Mammary epithelial cell (primary cell): ENCODE measurements at regions of chr10 and their contacts with region 1.

Region 1: DNA sequence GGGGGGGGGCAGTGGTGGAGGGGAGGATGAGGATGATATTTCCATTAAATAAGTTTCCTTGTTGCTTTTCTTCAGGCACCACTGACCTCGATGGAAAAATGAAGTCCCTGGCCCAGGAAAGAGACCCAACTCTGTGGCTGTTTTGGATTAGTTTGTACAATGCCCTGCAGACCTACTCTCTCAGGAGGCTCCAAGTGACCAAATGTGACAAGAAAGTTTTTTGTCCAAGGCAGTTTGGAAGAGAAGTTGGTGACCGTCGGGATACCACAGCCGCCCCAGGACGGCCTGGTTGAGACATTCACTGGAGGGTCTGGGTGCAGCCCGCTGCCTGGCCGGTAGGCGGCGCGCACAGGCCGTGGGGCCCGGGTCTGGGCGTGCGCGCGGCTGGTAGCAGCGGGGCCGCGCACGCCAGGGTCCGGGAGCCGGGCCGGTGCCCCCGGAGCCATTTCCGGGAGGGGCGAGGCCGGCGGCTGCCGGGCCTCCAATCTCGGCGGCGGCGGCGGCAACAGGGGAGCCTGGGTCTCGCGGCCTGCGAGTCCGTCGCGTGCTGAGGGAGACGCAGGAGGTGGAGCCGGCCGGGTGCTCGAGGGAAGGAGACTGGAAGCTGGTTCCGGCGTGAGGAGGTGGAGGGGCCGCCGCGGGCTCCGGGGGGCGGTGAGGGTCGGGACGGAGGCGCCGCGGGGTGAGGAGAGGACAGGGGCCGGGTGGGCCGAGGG is at the start of gene SGPL1:
- DNase-seq: peak; percentile 81
- H3K4me3 ChIP-seq: peak within 1 kb of the TSS; percentile 63 to 71 (median 66)
- H3K27ac ChIP-seq: peak within 1 kb of the TSS; percentile 69
- H3K4me1 ChIP-seq: no peaks in the 10 kb centered on the region
- H3K27me3 ChIP-seq: no peaks in the 10 kb centered on the region
- CTCF ChIP-seq: peak; percentile 86 to 90
- total RNA-seq, gene SGPL1: 65.0 to 97.4 TPM

Region 2: DNA sequence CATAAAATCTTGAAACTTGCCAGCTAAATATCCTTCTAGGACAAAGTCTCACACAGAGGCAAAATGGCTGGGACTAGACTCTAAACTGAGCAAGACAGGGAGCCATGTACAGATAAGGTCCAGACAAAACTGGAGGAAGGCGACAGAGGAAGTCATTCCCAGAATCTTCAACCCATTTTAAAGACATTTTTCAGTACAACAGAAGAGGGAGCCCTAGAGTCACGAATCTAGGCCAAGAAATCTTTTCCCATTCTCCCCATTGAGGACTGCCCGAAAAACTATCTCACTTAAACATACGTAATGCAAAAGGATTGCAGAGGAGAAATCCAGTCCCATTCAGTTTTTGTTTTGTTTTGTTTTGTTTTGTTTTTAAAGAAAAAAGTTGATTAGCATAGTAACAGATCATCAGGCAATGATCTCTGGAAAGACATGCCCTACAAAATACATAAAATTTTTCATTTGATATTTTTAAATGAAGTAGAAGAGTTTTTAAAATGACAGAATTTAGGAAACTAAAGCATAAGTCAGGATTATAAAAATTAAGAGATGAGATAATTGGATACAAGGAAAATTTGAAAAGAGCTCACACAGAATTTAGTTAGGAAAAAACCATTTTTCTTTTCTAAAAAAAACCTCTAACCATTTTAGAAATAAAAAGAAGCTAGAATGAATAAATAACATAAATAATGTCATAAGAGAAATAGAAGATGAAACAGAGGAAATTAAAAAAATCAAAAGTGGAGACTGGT is 196.2 kb before region 1 on chr10:
- CTCF ChIA-PET with region 1: no interaction called
- dilution Hi-C with region 1: no loop called
- in situ Hi-C with region 1: no loop called
- intact Hi-C with region 1: loop called (anchors 1 kb)
- DNase-seq: peak; percentile 44
- H3K4me3 ChIP-seq: no peak overlapping the region
- H3K27ac ChIP-seq: no peak overlapping the region
- H3K4me1 ChIP-seq: no peaks in the 10 kb centered on the region
- H3K27me3 ChIP-seq: peaks cover 4% of the 10 kb centered on the region
- CTCF ChIP-seq: peak; percentile 41 to 50

Region 3: DNA sequence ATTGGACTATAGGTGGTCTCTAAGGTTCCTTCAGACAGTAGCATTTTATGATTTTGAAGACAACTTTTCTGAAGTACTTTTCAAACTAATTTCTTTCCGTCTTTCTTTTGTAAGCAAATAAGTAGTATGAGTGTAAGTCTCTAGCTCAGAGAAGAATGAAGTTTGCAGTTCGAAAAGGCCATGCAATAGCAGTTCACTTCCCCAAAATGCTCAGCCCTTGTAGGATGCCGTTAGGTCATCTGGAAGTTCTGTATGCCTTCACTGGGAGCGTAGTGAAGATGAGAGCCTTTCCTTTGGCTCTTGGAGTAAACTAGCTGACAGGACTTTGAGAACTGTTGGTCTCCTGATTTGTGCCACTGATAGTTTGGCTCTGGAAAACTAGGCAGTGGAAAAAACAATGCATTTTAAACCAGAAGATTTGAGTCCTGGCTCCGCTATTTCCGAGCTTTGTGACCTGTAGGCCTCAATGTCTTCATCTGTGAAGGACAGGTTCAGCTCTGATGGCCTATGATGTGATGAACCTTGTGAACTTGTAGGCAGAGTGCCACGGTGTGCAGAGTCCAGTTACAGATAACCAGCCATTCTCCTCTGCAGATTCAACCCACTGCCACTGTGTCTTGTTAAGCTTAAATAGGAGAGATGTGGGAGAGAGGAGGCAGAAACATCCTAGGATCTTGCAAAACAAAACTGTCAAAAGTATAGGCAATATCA is 18.9 kb after region 1 on chr10:
- CTCF ChIA-PET with region 1: interaction called, 19 read pairs
- dilution Hi-C with region 1: no loop called
- in situ Hi-C with region 1: no loop called
- intact Hi-C with region 1: no loop called
- DNase-seq: no peak
- H3K4me3 ChIP-seq: no peak overlapping the region
- H3K27ac ChIP-seq: no peak overlapping the region
- H3K4me1 ChIP-seq: peaks cover 33% of the 10 kb centered on the region
- H3K27me3 ChIP-seq: no peaks in the 10 kb centered on the region
- CTCF ChIP-seq: no peak

Region 4: DNA sequence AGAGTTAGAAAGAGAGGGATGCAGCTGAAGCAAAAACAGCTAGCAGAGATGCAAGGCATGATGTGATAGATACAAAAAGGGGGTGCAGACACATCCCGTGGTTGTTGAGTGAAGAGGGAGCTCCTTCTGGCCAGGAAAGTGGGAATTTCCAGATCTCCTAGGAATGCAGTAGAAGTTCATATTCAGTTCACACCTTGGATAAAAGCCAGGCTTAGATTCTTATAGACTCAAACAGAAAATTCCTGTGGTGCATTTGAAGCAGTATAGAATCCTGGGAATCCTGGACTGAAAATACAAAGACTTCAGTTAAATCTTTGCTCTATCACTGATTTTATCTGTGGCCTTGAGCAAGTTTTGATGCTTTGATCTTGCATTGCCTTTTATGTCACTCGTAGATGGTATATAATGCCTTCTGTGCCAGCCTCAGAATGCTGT is 33.9 kb after region 1 on chr10:
- CTCF ChIA-PET with region 1: no interaction called
- dilution Hi-C with region 1: no loop called
- in situ Hi-C with region 1: no loop called
- intact Hi-C with region 1: loop called (anchors 5 kb)
- DNase-seq: peak; percentile 73
- H3K4me3 ChIP-seq: no peak overlapping the region
- H3K27ac ChIP-seq: no peak overlapping the region
- H3K4me1 ChIP-seq: peaks cover 22% of the 10 kb centered on the region
- H3K27me3 ChIP-seq: no peaks in the 10 kb centered on the region
- CTCF ChIP-seq: no peak

Region 5: GRCh38 chr10:70874045-70874444 is 58.4 kb after region 1 on chr10:
- CTCF ChIA-PET with region 1: no interaction called
- dilution Hi-C with region 1: no loop called
- in situ Hi-C with region 1: loop called in 1 of 2 experiments (anchors 5 kb)
- intact Hi-C with region 1: no loop called
- DNase-seq: no peak
- H3K4me3 ChIP-seq: no peak overlapping the region
- H3K27ac ChIP-seq: no peak overlapping the region
- H3K4me1 ChIP-seq: no peaks in the 10 kb centered on the region
- H3K27me3 ChIP-seq: no peaks in the 10 kb centered on the region
- CTCF ChIP-seq: no peak

Region 6: DNA sequence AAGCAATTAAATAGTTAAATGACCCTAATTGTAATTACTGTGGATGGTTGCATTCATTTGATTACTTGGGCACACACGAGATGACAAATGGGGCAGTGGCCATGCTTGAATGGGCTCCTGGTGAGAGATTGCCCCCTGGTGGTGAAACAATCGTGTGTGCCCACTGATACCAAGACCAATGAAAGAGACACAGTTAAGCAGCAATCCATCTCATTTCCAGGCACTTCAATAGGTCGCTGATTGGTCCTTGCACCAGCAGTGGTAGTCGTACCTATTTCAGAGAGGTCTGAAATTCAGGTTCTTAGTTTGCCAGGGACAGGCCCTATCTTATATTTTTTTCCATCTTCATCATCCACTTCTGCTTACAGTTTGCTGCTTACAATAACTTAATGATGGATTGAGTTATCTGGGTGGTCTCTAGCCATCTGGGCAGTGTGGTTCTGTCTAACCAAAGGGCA is 64.4 kb after region 1 on chr10:
- CTCF ChIA-PET with region 1: no interaction called
- dilution Hi-C with region 1: no loop called
- in situ Hi-C with region 1: loop called in 1 of 2 experiments (anchors 5 kb)
- intact Hi-C with region 1: loop called (anchors 1 kb)
- DNase-seq: peak; percentile 54
- H3K4me3 ChIP-seq: no peak overlapping the region
- H3K27ac ChIP-seq: no peak overlapping the region
- H3K4me1 ChIP-seq: no peaks in the 10 kb centered on the region
- H3K27me3 ChIP-seq: no peaks in the 10 kb centered on the region
- CTCF ChIP-seq: peak; percentile 92 to 94